Activated T-helper 2 cell treated with anti-CD3 and anti-CD28 coated beads, Interferon-gamma antibody, Interleukin-2, Interleukin-4, amounts not matched to agents 10 μg/mL and 5 μg/mL and 100 μg/mL, durations not matched to agents 14 hours and 24 hours and 36 hours (primary cell): ENCODE measurements at regions of chrX and their contacts with region 1.

Region 1: GRCh38 chrX:48897621-48898306 is at the starts of genes PQBP1 and TIMM17B:
- DNase-seq: peak; percentile 85
- H3K4me3 Mint-ChIP-seq: peak within 1 kb of the TSS; percentile 97
- H3K27ac Mint-ChIP-seq: peak within 1 kb of the TSS; percentile 100
- H3K4me1 Mint-ChIP-seq: peaks cover 14% of the 10 kb centered on the region
- H3K27me3 Mint-ChIP-seq: no peaks in the 10 kb centered on the region
- total RNA-seq, gene PQBP1: 97.3 and 103 TPM in 2 replicates
- total RNA-seq, gene TIMM17B: 66.2 and 71.6 TPM in 2 replicates

Region 2: DNA sequence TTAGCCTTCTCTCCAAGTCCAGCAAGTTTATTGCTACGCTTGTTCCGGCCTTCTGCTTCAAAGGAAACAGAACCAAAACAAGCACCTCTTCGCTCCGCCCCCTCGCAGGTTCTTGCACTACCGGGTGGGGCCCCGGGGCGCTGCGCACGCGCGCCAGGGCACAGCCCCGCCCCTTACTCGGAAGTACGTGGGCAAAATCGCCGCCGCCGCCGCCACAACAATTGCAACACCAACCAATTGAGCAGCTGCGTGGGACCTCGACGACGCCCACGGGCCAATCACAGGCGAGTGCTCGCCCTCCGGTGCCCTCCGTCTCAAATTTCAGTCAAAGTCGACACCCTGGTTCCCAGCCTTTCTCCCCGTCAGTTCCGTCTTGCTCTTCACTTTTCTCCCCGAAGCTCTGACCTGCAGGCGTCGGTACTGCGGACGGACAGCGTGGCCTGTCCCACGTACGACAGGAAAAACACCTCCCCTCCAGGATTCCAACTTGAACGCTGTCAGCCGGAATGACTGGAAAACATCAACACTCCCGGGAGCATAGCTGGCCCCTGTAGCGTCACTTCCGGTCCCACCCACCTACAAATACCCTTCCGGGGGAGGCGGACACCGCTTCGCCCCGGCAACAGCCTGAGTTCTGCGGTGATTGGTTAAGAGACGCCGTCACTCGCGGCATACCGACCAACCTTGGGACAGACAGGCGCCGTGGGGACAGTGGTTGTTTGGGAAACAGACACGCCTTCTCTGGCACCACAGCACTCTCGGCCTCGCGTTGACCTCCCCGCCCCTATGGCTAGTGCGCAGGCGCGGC is 60.3 kb after region 1 on chrX:
- intact Hi-C with region 1: loop called (anchors 5 kb)
- DNase-seq: peak; percentile 91
- H3K4me3 Mint-ChIP-seq: peak overlapping the region; percentile 99
- H3K27ac Mint-ChIP-seq: peak overlapping the region; percentile 100
- H3K4me1 Mint-ChIP-seq: peaks cover 34% of the 10 kb centered on the region
- H3K27me3 Mint-ChIP-seq: no peaks in the 10 kb centered on the region